Esophagus muscularis mucosa (tissue), 4 donors: ENCODE measurements at regions of chr9 and their contacts with region 1.

Region 1: GRCh38 chr9:37913480-37914153 is 9.7 kb upstream of the SLC25A51 start:
- DNase-seq: peak; percentile 96
- H3K4me3 ChIP-seq: no peak overlapping the region
- H3K27ac ChIP-seq: no peak overlapping the region
- H3K4me1 ChIP-seq: peaks cover 21 to 35% (median 31%) of the 10 kb centered on the region in 4 donors
- H3K27me3 ChIP-seq: no peaks in the 10 kb centered on the region
- CTCF ChIP-seq: peak in 2 of 3 experiments; percentile 96 to 97
- EP300 ChIP-seq: no peak
- POLR2A ChIP-seq: no peak

Region 2: DNA sequence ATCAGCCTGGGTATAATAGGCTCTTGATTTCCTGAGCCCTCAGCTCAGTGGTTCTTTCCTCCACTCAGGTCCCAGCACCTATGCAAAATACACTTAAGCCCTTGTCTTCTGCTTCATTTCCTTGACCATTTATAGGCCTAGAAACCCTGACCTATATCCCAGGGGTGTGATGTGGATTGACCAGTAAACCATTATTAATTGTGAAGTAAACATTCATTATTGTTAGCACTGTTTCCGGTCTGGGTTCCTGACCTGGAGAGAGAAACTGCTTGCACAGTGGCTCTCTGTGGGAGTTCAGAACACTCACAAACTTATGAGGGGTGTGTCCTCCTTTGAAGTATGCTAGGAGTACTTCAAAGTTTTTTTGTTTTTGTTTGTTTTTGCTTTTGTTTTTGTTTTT is 301.7 kb before region 1 on chr9:
- intact Hi-C with region 1: no loop called
- DNase-seq: no peak
- H3K4me3 ChIP-seq: no peak overlapping the region
- H3K27ac ChIP-seq: no peak overlapping the region
- H3K4me1 ChIP-seq: no peaks in the 10 kb centered on the region
- H3K27me3 ChIP-seq: peaks cover 0 to 3% (median 0%) of the 10 kb centered on the region in 4 donors
- CTCF ChIP-seq: no peak
- EP300 ChIP-seq: no peak
- POLR2A ChIP-seq: no peak

Region 3: DNA sequence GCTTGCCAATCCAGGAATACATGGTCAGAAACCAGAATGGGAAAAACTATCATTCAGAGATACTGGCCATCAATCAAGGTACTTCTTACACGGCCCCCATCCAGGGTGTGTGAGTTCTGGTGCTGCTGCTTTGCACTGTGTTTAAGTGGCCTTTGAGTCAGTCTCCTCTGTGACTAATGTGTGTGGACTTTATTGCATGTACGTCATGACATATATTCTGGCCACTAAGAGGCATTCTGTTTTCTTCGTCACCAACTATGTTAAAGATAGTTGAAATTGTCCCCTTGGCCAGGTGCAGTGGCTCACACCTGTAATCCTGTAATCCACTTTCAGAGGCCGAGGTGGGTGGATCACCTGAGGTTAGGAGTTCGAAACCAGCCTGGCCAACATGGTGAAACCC is 137.3 kb before region 1 on chr9:
- intact Hi-C with region 1: no loop called
- DNase-seq: no peak
- H3K4me3 ChIP-seq: no peak overlapping the region
- H3K27ac ChIP-seq: no peak overlapping the region
- H3K4me1 ChIP-seq: no peaks in the 10 kb centered on the region
- H3K27me3 ChIP-seq: no peaks in the 10 kb centered on the region
- CTCF ChIP-seq: no peak
- EP300 ChIP-seq: no peak
- POLR2A ChIP-seq: no peak

Region 4: GRCh38 chr9:37800631-37801286 is 112.9 kb before region 1 on chr9 and contains the start of gene DCAF10:
- intact Hi-C with region 1: no loop called
- DNase-seq: peak; percentile 96
- H3K4me3 ChIP-seq: peak within 1 kb of the TSS; percentile 80 to 95 (median 93)
- H3K27ac ChIP-seq: peak within 1 kb of the TSS; percentile 89 to 93 (median 91)
- H3K4me1 ChIP-seq: peaks cover 27 to 53% (median 35%) of the 10 kb centered on the region in 4 donors
- H3K27me3 ChIP-seq: no peaks in the 10 kb centered on the region
- CTCF ChIP-seq: peak in 2 of 3 experiments; percentile 5
- EP300 ChIP-seq: no peak
- POLR2A ChIP-seq: peak; percentile 49
- total RNA-seq, gene DCAF10: 19.4 to 40.6 (median 36.6) TPM

Region 5: GRCh38 chr9:38068866-38069629 is 155.4 kb after region 1 on chr9 and contains the start of gene SHB:
- intact Hi-C with region 1: loop called (anchors 2 kb)
- DNase-seq: peak; percentile 96
- H3K4me3 ChIP-seq: peak within 1 kb of the TSS; percentile 89 to 99 (median 94)
- H3K27ac ChIP-seq: peak within 1 kb of the TSS; percentile 87 to 98 (median 93)
- H3K4me1 ChIP-seq: peaks cover 39 to 54% (median 50%) of the 10 kb centered on the region in 4 donors
- H3K27me3 ChIP-seq: peaks cover 0 to 4% (median 0%) of the 10 kb centered on the region in 4 donors
- CTCF ChIP-seq: peak in 2 of 3 experiments; percentile 48 to 51
- EP300 ChIP-seq: no peak
- POLR2A ChIP-seq: peak; percentile 49
- total RNA-seq, gene SHB: 16.6 to 21.2 (median 21.0) TPM

Region 6: DNA sequence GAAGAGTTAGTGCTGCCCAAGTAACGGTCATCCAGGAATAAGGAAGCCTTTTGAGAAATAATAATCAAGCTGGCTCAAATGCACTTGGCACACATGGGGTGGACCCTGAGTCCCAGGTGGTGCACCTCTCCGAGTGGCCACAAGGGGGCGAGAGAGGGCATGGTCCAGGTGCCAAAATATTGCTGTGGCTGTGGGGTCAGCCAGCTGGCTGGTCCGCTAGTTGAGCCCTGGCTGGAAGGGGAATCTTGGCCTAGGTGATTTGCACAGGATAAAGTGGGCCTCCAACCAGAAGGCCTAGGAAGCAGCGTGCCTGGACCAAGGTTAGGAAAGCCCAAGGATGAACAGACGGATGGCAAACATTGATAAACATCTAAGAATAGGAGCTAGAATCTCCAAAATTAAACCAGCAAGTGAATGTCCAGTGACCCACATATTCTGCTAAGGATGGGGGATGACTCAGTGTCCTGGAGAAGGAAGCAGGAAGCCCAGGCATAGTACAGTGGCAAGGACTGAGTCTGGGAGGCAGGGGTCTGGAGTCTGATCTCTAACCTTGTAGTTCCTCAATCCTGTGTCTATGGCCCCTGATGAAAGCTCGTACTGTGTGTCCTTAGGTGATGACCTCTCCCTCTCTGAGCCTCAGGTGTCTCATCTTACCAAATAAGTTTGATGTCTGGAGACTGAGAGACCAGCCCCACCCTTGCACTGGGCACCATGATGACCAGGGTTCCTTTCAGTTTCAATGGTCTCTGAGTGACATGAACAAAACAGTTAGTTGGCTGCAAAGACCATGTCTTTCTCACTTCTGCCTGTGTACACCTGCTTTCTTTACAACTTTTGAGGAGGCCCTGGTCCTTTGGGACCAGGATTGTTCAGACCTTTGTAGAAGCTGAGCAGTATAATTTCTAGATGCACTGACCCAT is 174.6 kb after region 1 on chr9:
- intact Hi-C with region 1: loop called (anchors 5 kb)
- DNase-seq: peak; percentile 96
- H3K4me3 ChIP-seq: no peak overlapping the region
- H3K27ac ChIP-seq: no peak overlapping the region
- H3K4me1 ChIP-seq: peaks cover 3 to 10% (median 7%) of the 10 kb centered on the region in 4 donors
- H3K27me3 ChIP-seq: no peaks in the 10 kb centered on the region
- CTCF ChIP-seq: peak; percentile 89 to 99 (median 95)
- EP300 ChIP-seq: no peak
- POLR2A ChIP-seq: no peak

Region 7: GRCh38 chr9:38160613-38161215 is 247.1 kb after region 1 on chr9:
- intact Hi-C with region 1: loop called (anchors 2 kb)
- DNase-seq: no peak
- H3K4me3 ChIP-seq: no peak overlapping the region
- H3K27ac ChIP-seq: no peak overlapping the region
- H3K4me1 ChIP-seq: no peaks in the 10 kb centered on the region
- H3K27me3 ChIP-seq: no peaks in the 10 kb centered on the region
- CTCF ChIP-seq: peak; percentile 66 to 81 (median 74)
- EP300 ChIP-seq: no peak
- POLR2A ChIP-seq: no peak

Region 8: GRCh38 chr9:38227061-38227540 is 313.5 kb after region 1 on chr9:
- intact Hi-C with region 1: no loop called
- DNase-seq: no peak
- H3K4me3 ChIP-seq: peak overlapping the region in 2 of 4 donors; percentile 12 to 14
- H3K27ac ChIP-seq: no peak overlapping the region
- H3K4me1 ChIP-seq: peaks cover 3 to 16% (median 12%) of the 10 kb centered on the region in 4 donors
- H3K27me3 ChIP-seq: peaks cover 0 to 12% (median 0%) of the 10 kb centered on the region in 4 donors
- CTCF ChIP-seq: no peak
- EP300 ChIP-seq: no peak
- POLR2A ChIP-seq: no peak

Region 9: DNA sequence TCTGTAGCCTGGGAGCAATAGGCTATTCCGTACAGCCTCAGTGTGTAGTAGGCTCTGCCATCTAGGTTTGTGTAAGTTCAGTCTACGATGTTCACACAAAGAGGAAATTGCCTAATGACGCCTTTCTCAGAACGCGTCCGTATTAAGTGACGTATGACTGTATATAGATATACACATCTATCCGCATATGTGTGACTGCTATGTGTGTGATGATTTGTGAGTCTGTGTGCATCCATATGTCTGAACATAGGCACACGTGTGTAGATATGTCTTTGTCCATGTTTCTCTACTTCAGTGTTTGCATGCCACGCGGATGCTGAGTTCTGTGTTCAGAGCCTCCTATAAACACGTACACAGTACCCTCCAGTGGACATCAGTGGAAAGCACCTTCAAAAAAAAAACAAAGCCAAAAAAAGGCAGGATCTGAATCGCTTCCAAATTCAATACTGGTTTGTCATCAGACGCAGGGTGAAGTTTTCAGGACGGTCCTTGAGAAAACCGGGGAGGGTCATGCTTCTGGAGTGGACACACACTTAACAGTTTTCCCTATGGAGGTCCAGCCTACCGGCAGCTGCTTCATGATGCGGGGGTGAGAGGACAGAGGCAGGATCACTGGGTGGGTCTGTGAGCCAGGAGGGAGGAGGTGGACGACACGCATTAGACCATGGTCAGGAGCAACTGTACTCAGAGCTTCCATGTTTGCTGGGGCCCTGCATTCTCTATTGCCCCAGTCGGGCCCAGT is 449.4 kb after region 1 on chr9:
- intact Hi-C with region 1: loop called (anchors 2 kb)
- DNase-seq: no peak
- H3K4me3 ChIP-seq: peak overlapping the region in 2 of 4 donors; percentile 13 to 24
- H3K27ac ChIP-seq: no peak overlapping the region
- H3K4me1 ChIP-seq: peaks cover 0 to 30% (median 27%) of the 10 kb centered on the region in 4 donors
- H3K27me3 ChIP-seq: no peaks in the 10 kb centered on the region
- CTCF ChIP-seq: peak; percentile 58 to 61 (median 59)
- EP300 ChIP-seq: no peak
- POLR2A ChIP-seq: no peak

Region 10: GRCh38 chr9:38432922-38433510 is 519.4 kb after region 1 on chr9:
- intact Hi-C with region 1: loop called (anchors 10 kb)
- DNase-seq: no peak
- H3K4me3 ChIP-seq: no peak overlapping the region
- H3K27ac ChIP-seq: no peak overlapping the region
- H3K4me1 ChIP-seq: no peaks in the 10 kb centered on the region
- H3K27me3 ChIP-seq: no peaks in the 10 kb centered on the region
- CTCF ChIP-seq: peak; percentile 52 to 67 (median 60)
- EP300 ChIP-seq: no peak
- POLR2A ChIP-seq: no peak